GM12878 (cell line): ENCODE measurements at regions of chr14 and their contacts with region 1.

Region 1: DNA sequence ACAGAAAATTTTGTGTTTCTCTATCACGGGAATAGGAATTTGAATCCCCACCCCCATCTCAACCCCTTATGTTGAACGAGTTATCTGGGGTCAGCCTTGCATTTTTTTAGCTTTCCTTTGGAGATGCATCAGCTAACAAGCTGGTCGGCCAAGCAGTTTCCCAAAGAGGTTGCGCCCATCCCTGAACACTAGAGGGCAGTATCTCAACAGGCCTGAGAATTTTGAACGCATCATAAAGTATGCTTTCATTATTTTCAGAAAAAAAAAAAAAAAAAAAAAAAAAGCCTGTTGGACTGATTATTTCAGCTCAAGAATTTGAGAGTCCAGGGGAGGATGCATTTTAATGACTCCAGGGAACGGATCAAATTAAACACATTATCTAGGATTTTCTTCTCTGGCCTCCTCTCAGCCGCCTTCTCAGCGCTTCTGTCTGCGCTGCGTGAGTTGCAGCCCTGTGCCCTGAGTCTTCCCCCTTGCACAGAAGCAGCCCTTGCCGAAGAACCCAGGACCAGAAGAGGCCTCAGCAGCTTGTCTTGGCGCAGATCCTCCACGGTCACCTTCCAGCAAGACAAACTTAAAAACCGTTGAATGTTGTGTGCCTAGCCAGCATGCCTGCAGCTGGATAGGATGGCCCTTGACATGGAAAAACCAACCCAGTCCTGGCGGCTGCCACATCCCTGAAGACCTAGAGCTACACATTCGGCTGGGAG is 76.6 kb upstream of the GZMB start:
- DNase-seq: no peak
- ATAC-seq: peak; percentile 50
- H3K4me3 ChIP-seq: no peak overlapping the region
- H3K27ac ChIP-seq: no peak overlapping the region
- H3K4me1 ChIP-seq: peaks cover 15% of the 10 kb centered on the region
- H3K27me3 ChIP-seq: no peaks in the 10 kb centered on the region
- CTCF ChIP-seq: peak; percentile 81 to 89 (median 82)
- EP300 ChIP-seq: no peak
- POLR2A ChIP-seq: no peak
- RAD21 ChIP-seq: peak; percentile 80

Region 2: GRCh38 chr14:24411443-24412389 is 298.8 kb before region 1 on chr14:
- CTCF ChIA-PET with region 1: no interaction called
- POLR2A ChIA-PET with region 1: no interaction called
- RAD21 ChIA-PET with region 1: no interaction called
- SMC1A ChIA-PET with region 1: no interaction called
- in situ Hi-C with region 1: no loop called
- intact Hi-C with region 1: no loop called
- DNase-seq: no peak
- ATAC-seq: peak; percentile 87
- H3K4me3 ChIP-seq: no peak overlapping the region
- H3K27ac ChIP-seq: no peak overlapping the region
- H3K4me1 ChIP-seq: no peaks in the 10 kb centered on the region
- H3K27me3 ChIP-seq: peaks cover 1 to 5% of the 10 kb centered on the region in 2 experiments; a peak in 2 of 4 replicates
- CTCF ChIP-seq: peak; percentile 54 to 79 (median 58)
- EP300 ChIP-seq: no peak
- POLR2A ChIP-seq: no peak
- RAD21 ChIP-seq: peak; percentile 62

Region 3: DNA sequence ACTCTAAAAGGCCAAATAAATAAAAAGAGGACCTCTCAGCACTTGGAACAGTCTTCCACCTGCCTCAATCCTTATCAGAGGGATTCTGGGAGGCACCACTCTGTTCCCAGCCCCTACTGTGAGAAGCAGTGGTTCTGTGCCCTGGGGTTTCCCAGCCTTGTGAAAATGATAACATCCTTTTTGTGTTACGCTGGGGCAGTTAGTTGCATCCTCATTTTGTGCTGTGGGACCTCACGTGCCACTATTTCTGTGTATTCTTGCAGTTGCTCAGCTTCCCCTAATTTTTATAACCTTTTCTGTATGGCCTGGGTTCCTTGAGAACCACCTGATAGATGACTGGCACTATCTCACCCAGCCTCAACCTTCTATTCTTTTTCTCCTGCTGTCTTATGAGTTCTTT is 191.7 kb before region 1 on chr14:
- CTCF ChIA-PET with region 1: no interaction called
- POLR2A ChIA-PET with region 1: no interaction called
- RAD21 ChIA-PET with region 1: no interaction called
- SMC1A ChIA-PET with region 1: no interaction called
- in situ Hi-C with region 1: no loop called
- intact Hi-C with region 1: no loop called
- DNase-seq: no peak
- ATAC-seq: no peak
- H3K4me3 ChIP-seq: no peak overlapping the region
- H3K27ac ChIP-seq: no peak overlapping the region
- H3K4me1 ChIP-seq: no peaks in the 10 kb centered on the region
- H3K27me3 ChIP-seq: no peaks in the 10 kb centered on the region
- CTCF ChIP-seq: no peak
- EP300 ChIP-seq: no peak
- POLR2A ChIP-seq: no peak
- RAD21 ChIP-seq: no peak

Region 4: DNA sequence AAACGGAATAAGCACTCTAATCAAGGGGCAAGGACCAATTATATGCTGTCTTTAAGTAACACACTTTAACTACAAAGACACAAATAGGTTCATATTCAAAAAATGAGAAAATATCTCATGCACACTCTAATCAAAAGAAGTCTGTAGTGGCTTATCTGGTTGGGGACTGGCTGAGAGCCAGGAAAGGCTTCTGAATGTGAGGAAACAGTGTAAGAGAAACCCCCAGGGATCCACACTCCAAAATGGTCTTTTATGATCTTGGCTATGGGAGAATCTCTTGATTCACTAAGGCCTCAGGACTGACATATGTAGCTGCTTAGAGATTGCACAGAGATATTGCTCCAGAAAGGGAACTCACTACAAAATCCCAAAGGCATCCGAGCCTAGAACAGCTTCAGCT is 144.8 kb before region 1 on chr14:
- CTCF ChIA-PET with region 1: no interaction called
- POLR2A ChIA-PET with region 1: no interaction called
- RAD21 ChIA-PET with region 1: no interaction called
- SMC1A ChIA-PET with region 1: no interaction called
- in situ Hi-C with region 1: no loop called
- intact Hi-C with region 1: no loop called
- DNase-seq: no peak
- ATAC-seq: no peak
- H3K4me3 ChIP-seq: no peak overlapping the region
- H3K27ac ChIP-seq: no peak overlapping the region
- H3K4me1 ChIP-seq: no peaks in the 10 kb centered on the region
- H3K27me3 ChIP-seq: no peaks in the 10 kb centered on the region
- CTCF ChIP-seq: no peak
- EP300 ChIP-seq: no peak
- POLR2A ChIP-seq: no peak
- RAD21 ChIP-seq: no peak

Region 5: DNA sequence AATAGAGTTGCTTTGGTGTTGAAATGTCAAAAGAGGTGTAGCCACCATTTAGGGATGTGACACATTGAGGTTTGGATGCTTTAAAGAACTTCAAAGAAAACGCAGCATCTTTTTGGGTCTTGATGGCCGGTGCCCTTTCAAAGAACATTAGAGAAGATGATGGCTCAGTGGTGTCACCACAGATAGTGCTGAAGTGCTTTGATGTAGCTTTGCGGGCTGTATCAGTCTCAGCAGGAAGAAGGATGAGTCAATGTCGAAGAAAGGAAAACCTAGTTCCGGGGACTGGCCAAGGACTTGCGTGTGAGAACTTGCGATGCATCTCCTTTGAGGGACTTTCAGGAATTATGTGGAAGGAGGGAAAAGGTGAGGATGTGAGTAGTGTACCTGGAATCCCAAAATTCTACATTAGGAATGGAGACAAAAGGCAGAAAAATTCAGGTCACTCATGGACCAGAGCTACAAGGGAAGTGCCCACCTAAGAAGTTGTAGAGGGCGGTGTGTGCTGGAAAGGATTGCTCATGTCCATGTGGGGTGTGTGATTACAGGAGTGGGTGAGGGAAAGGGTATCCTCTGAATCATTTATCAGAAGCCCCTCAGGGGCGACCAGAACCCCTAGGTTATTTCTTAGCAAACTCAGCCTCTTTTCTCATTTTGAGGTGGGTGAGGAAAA is 36.9 kb before region 1 on chr14:
- CTCF ChIA-PET with region 1: interaction called, 49 read pairs
- POLR2A ChIA-PET with region 1: interaction called, 3 read pairs
- RAD21 ChIA-PET with region 1: interaction called, 12 read pairs
- SMC1A ChIA-PET with region 1: interaction called, 12 read pairs
- in situ Hi-C with region 1: no loop called
- intact Hi-C with region 1: no loop called
- DNase-seq: peak; percentile 71
- ATAC-seq: peak; percentile 86
- H3K4me3 ChIP-seq: peak overlapping the region; percentile 75
- H3K27ac ChIP-seq: peak overlapping the region; percentile 99
- H3K4me1 ChIP-seq: peaks cover 36% of the 10 kb centered on the region
- H3K27me3 ChIP-seq: no peaks in the 10 kb centered on the region
- CTCF ChIP-seq: no peak
- EP300 ChIP-seq: 0 out of 4 replicates have a peak, but pooled peaks of 1 of the 2 experiments have one; percentile 5
- POLR2A ChIP-seq: no peak
- RAD21 ChIP-seq: no peak

Region 6: DNA sequence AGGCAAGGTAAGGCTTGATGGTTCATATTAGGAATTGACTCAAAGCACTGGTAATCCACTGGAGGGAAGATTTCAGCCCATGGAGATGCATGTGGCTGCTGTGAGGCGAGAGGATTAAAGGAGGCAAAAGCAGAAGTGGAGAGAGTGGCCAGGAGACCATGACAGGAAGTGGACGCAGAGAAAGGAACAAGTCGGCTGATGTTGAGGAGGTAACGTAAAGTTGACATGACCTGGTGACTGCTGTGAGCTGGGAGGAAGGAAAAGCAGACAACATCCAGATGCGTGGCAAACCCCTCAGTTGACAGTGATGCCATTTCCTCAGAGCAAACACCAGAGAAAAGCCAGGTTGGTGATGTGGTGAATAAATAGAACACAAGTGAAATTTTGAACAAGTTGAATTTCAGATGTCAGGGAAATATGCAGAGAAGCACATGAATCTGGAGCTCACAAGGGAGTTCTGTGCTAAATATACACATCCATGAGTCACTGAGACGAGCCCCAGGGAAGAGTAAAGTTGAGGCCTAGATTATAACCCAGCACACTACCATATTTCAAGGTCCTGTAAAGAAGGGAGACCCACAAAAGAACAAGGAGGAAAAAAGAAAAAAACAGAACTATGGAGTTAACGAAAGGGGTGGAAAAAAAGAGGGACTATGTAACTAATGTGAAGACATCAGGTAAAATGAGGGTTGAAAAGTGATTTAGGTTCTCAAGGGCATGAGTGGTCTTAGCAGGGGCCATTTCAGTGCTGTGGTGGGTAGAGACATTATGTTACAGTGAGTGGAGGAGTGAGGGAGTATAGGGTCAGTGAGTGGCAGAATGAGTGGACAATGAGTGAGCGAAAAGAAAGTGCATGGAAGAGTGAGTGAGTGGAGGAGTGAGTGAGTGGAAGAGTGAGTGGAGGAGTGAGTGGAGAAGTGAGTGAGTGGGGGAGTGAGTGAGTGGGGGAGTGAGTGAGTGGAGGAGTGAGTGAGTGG is 15.0 kb before region 1 on chr14:
- CTCF ChIA-PET with region 1: interaction called, 57 read pairs
- POLR2A ChIA-PET with region 1: interaction called, 14 read pairs
- RAD21 ChIA-PET with region 1: interaction called, 73 read pairs
- SMC1A ChIA-PET with region 1: interaction called, 60 read pairs
- in situ Hi-C with region 1: no loop called
- intact Hi-C with region 1: no loop called
- DNase-seq: peak; percentile 66
- ATAC-seq: peak; percentile 71
- H3K4me3 ChIP-seq: no peak overlapping the region
- H3K27ac ChIP-seq: peak overlapping the region; percentile 30
- H3K4me1 ChIP-seq: peaks cover 31% of the 10 kb centered on the region
- H3K27me3 ChIP-seq: no peaks in the 10 kb centered on the region
- CTCF ChIP-seq: no peak
- EP300 ChIP-seq: peak; percentile 34 to 37; a peak in 1 of 4 replicates
- POLR2A ChIP-seq: no peak
- RAD21 ChIP-seq: no peak

Region 7: DNA sequence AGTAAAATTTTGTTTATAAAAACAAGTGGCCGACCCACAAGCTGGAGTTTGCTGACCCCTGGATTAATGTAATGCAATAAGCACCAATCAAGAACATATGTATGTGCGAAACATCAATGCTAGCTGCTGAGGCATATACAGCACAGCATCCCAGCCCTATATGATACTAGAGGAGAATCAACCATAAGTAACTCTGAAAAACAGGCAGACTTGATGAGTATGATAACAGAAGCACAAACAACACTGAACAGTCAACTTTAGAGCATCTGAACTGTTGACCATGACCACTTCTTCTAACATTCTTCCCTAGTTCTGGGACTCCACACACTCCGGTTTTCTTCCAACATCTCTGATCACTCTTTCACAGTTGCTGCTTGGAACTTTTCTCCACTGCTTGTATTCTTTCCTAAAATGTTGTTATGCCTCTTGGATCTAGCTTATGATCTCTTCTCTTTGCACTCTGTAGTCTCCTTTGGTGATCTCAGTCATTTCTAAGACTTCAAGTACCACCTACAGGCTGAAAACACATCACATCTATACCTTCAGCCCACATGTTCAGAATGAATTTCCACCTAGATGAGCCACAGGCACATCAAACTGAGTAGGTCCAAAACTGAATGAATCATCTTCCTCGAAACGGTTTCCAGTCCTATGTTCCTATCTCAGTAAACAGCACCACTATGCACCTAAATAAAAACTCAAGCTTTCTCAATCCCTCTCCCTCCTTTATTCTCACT is 282.2 kb after region 1 on chr14:
- CTCF ChIA-PET with region 1: interaction called, 20 read pairs
- POLR2A ChIA-PET with region 1: no interaction called
- RAD21 ChIA-PET with region 1: interaction called, 6 read pairs
- SMC1A ChIA-PET with region 1: interaction called, 11 read pairs
- in situ Hi-C with region 1: no loop called
- intact Hi-C with region 1: no loop called
- DNase-seq: no peak
- ATAC-seq: peak; percentile 69
- H3K4me3 ChIP-seq: no peak overlapping the region
- H3K27ac ChIP-seq: no peak overlapping the region
- H3K4me1 ChIP-seq: no peaks in the 10 kb centered on the region; the same call in 1 of the 2 replicates
- H3K27me3 ChIP-seq: no peaks in the 10 kb centered on the region
- CTCF ChIP-seq: peak in 1 of 3 experiments; percentile 25; a peak in 1 of 6 replicates
- EP300 ChIP-seq: no peak
- POLR2A ChIP-seq: no peak
- RAD21 ChIP-seq: no peak

Region 8: DNA sequence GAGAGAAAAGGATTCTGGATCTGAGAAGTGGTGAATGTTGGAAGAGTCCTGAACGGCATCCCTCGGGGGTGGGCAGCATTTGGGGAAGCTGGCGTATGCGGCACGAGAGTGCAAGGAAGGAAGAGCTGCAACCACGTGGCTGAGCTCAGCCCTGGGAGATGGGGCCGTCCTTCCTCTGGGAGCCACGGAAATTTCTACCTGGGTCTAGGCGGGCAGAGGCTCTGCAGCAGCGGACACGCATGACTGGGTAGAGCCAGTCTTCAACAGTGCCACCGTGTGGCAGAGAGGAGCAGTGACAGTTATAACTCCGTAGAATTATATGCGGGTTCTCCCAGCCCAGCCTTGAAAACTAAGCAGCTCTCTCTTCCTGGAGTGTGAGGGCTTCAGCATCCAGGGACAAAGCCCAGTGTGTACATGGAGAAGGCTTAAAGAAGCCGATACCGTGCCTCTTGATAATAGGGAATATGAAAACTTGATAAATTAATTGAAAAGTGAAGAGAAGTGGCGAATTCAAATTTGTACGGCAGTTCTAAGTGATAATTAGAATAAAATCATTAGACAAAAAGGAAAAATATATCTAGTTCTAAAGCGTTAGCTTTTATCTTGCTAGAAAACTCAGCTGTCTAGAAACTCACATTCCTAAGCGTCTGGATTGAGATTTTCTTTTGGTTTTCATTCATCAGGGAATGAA is 422.3 kb after region 1 on chr14:
- CTCF ChIA-PET with region 1: interaction called, 102 read pairs
- POLR2A ChIA-PET with region 1: no interaction called
- RAD21 ChIA-PET with region 1: interaction called, 30 read pairs
- SMC1A ChIA-PET with region 1: interaction called, 50 read pairs
- in situ Hi-C with region 1: no loop called
- intact Hi-C with region 1: loop called (anchors 1 kb)
- DNase-seq: no peak
- ATAC-seq: peak; percentile 97
- H3K4me3 ChIP-seq: no peak overlapping the region
- H3K27ac ChIP-seq: no peak overlapping the region
- H3K4me1 ChIP-seq: no peaks in the 10 kb centered on the region
- H3K27me3 ChIP-seq: no peaks in the 10 kb centered on the region
- CTCF ChIP-seq: peak; percentile 76 to 79 (median 76)
- EP300 ChIP-seq: no peak
- POLR2A ChIP-seq: no peak
- RAD21 ChIP-seq: peak; percentile 57

Region 9: DNA sequence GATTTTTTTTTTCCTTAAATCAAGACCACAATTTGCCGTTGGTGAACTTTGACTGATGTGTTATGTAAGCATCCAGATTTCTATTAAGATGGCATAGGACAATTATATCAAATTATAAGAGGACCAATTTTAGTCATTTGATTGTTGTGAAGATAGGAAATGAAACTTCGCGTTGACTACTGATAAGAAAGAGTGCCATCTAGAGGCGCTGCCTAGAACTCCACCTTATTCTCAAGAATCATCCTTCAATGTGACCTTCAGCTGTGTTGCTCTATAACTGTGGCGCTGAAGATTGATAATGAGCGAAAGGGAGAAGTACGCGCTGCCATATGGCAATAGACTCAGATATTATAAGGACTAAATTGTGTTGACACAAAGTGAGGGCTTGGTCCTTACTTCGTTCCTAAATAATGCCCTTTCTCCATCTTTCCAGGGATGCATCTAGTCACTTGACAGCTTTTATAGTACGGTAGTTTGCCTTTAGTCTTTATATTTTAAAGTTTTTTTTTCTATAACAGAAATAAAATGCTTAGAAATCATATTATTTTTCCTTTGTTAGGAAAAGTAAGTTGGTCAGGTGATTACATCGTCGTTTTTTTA is 690.1 kb after region 1 on chr14:
- CTCF ChIA-PET with region 1: interaction called, 18 read pairs
- POLR2A ChIA-PET with region 1: no interaction called
- RAD21 ChIA-PET with region 1: interaction called, 3 read pairs
- SMC1A ChIA-PET with region 1: interaction called, 6 read pairs
- in situ Hi-C with region 1: no loop called
- intact Hi-C with region 1: no loop called
- DNase-seq: no peak
- ATAC-seq: peak; percentile 79
- H3K4me3 ChIP-seq: no peak overlapping the region
- H3K27ac ChIP-seq: no peak overlapping the region
- H3K4me1 ChIP-seq: no peaks in the 10 kb centered on the region
- H3K27me3 ChIP-seq: no peaks in the 10 kb centered on the region
- CTCF ChIP-seq: peak; percentile 57 to 66 (median 65)
- EP300 ChIP-seq: no peak
- POLR2A ChIP-seq: no peak
- RAD21 ChIP-seq: peak; percentile 38